H1 (cell line): ENCODE measurements at regions of chr7 and their contacts with region 1.

Region 1: GRCh38 chr7:74401137-74401859 is 52.4 kb upstream of the GTF2IRD1 start:
- DNase-seq: peak; percentile 82 to 97
- H3K4me3 ChIP-seq: no peak overlapping the region
- H3K27ac ChIP-seq: no peak overlapping the region
- H3K4me1 ChIP-seq: peaks cover 0 to 5% (median under 1%) of the 10 kb centered on the region in 4 experiments; a peak in 3 of 7 replicates
- H3K27me3 ChIP-seq: no peaks in the 10 kb centered on the region
- CTCF ChIP-seq: peak; percentile 92 to 98 (median 97)
- EP300 ChIP-seq: no peak
- POLR2A ChIP-seq: no peak
- RAD21 ChIP-seq: peak; percentile 94

Region 2: DNA sequence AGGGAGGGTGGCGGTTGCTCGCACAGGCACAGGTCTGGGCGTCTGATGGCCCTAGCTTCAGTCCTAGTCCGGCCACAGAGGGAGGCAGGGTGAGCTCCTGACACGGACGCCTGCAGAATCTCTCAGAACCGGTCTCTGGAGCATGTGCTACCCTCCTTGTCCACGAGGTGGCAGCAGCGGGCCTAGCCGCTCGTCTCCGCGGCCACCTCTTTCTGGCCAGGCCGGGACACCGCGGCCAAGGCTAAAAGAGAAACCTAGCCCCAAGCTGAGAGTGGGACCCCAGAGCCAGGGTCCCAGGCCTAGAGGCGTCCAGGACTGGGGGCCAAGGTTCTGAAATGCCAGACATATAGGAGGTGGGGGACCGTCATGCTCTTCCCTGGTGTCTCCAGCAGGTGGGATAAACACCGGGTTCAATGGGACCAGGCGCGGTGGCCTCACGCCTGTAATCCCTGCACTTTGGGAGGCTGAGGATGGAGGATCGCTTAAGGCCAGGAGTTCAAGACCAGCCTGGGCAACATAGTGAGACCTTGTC is 194.6 kb before region 1 on chr7:
- CTCF ChIA-PET with region 1: interaction called, 132 read pairs
- POLR2A ChIA-PET with region 1: interaction called, 3 read pairs
- DNase-seq: peak; percentile 63 to 99
- H3K4me3 ChIP-seq: no peak overlapping the region
- H3K27ac ChIP-seq: no peak overlapping the region
- H3K4me1 ChIP-seq: 0 out of 7 replicates have a peak, but pooled peaks cover 0 to 2% (median 0%) of the 10 kb centered on the region in 4 experiments
- H3K27me3 ChIP-seq: no peaks in the 10 kb centered on the region
- CTCF ChIP-seq: peak; percentile 93 to 99 (median 95)
- EP300 ChIP-seq: no peak
- POLR2A ChIP-seq: no peak
- RAD21 ChIP-seq: peak; percentile 82 to 89

Region 3: DNA sequence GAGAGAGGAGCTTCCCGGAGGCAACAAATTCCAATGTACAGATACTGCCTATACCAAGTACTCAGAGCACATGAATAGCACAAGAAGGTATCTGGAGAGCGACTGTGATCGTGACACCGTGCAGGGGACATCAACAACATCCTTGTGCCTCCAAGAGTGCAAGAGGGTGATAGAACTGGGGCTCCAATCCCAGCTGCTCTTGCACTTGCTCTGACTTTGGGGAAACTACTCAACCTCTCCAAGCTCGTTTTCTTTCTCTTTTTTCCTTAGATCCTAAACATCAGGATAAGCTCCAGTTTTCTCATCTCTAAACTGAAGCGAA is 159.2 kb before region 1 on chr7:
- CTCF ChIA-PET with region 1: interaction called, 21 read pairs
- POLR2A ChIA-PET with region 1: no interaction called
- DNase-seq: no peak
- H3K4me3 ChIP-seq: no peak overlapping the region
- H3K27ac ChIP-seq: no peak overlapping the region
- H3K4me1 ChIP-seq: no peaks in the 10 kb centered on the region
- H3K27me3 ChIP-seq: no peaks in the 10 kb centered on the region; a peak in 1 of 7 replicates
- CTCF ChIP-seq: no peak
- EP300 ChIP-seq: no peak
- POLR2A ChIP-seq: no peak
- RAD21 ChIP-seq: no peak

Region 4: GRCh38 chr7:74272305-74273038 is 128.8 kb before region 1 on chr7:
- CTCF ChIA-PET with region 1: interaction called, 25 read pairs
- POLR2A ChIA-PET with region 1: no interaction called
- DNase-seq: no peak
- H3K4me3 ChIP-seq: no peak overlapping the region
- H3K27ac ChIP-seq: no peak overlapping the region
- H3K4me1 ChIP-seq: peaks cover 0 to 10% (median 7%) of the 10 kb centered on the region in 4 experiments; a peak in 6 of 7 replicates
- H3K27me3 ChIP-seq: no peaks in the 10 kb centered on the region; a peak in 1 of 7 replicates
- CTCF ChIP-seq: no peak
- EP300 ChIP-seq: no peak
- POLR2A ChIP-seq: no peak
- RAD21 ChIP-seq: no peak

Region 5: DNA sequence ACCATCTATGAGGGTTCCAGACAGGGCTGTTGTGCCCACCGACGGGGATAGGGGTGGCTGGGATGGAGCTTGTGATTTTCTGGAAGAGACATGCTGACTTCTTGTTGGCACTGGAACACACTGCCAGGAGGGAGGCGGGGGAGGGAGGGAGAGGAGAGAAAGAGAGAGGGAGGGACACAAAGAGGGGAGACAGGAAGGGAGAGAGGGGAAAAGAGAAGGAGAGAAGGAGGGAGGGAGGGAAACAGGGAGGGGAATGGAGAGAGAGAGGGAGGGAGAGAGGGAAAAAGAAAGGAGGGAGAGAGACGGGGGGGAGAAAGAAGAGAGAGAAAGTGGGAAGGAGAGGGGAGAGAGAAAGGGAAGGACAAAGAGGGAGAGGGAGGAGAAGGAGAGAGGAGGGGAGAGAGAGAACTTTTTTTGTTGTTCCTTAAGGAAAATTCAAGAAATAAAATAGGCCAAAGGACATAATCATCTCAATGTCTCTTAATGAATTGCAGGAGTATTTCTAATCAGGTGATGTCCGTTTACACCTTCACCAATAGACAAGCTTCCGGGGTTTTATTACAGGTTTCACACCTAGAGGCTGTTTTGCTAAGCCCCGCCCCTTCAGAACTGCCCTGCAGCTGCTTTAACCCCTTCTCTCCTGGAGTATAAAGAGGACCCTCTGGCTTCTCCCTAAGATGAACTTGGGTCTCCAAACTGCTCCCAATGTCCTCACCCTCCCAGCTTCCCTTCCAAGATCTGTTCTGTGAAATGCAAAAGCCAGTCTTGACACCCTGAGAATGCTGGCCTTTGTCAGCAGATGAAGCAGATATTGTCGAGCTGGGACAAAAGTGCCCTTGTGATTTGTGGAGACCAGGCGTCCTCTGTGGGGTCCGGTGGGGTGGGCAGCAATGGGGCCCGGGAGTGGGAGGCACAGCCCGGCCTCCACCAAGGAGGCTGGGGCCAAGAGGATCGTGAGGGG is 29.6 kb before region 1 on chr7:
- CTCF ChIA-PET with region 1: interaction called, 13 read pairs
- POLR2A ChIA-PET with region 1: interaction called, 4 read pairs
- DNase-seq: peak in 1 of 2 experiments; percentile 70
- H3K4me3 ChIP-seq: peak overlapping the region; percentile 33 to 56 (median 39); a peak in 6 of 8 replicates
- H3K27ac ChIP-seq: no peak overlapping the region
- H3K4me1 ChIP-seq: peaks cover 0 to 9% (median 4%) of the 10 kb centered on the region in 4 experiments; a peak in 4 of 7 replicates
- H3K27me3 ChIP-seq: no peaks in the 10 kb centered on the region; a peak in 1 of 7 replicates
- CTCF ChIP-seq: no peak
- EP300 ChIP-seq: no peak
- POLR2A ChIP-seq: peak in 1 of 2 experiments; percentile 31; a peak in 1 of 3 replicates
- RAD21 ChIP-seq: no peak

Region 6: DNA sequence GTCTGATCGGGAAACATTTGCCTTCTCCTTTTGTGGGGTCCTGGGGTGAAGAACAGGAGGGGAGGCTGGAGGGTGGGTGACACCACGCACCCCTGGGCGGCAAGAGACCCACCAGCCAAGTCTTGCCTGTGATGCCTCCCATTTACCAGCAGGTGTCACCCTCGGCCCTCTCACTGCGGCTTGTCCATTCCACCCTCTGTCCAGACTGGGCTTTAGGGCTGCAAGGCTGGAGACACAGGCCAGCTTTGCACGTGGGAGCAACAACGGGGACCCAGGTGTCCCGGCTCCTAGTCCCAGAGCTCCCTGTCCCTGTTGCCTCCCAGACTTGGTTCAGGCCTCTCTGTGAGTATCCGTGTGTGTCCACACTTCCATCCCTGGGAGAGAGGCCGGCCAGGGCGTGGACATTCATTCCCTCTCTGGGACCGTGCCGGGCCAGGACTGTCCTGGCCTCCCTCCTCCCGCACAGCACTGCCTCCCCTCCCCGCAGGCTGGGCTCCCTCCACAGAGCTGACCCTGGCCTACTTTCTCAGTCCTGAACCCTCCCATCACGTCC is 16.2 kb after region 1 on chr7:
- CTCF ChIA-PET with region 1: interaction called, 44 read pairs
- POLR2A ChIA-PET with region 1: interaction called, 8 read pairs
- DNase-seq: peak; percentile 44 to 89
- H3K4me3 ChIP-seq: no peak overlapping the region
- H3K27ac ChIP-seq: no peak overlapping the region
- H3K4me1 ChIP-seq: no peaks in the 10 kb centered on the region; a peak in 1 of 7 replicates
- H3K27me3 ChIP-seq: no peaks in the 10 kb centered on the region
- CTCF ChIP-seq: peak; percentile 95 to 98 (median 98)
- EP300 ChIP-seq: no peak
- POLR2A ChIP-seq: no peak
- RAD21 ChIP-seq: peak; percentile 98 to 99